Thyroid gland (tissue), 4 donors: ENCODE measurements at regions of chr2 and their contacts with region 1.

Region 1: GRCh38 chr2:15912205-15912604 is 28.1 kb upstream of the MYCN start:
- DNase-seq: peak; percentile 64 to 81
- H3K4me3 ChIP-seq: no peak overlapping the region
- H3K27ac ChIP-seq: peak overlapping the region; percentile 88 to 96 (median 93)
- H3K4me1 ChIP-seq: peaks cover 48 to 51% of the 10 kb centered on the region in 2 donors
- H3K27me3 ChIP-seq: no peaks in the 10 kb centered on the region
- CTCF ChIP-seq: no peak
- POLR2A ChIP-seq: no peak

Region 2: GRCh38 chr2:15092691-15093090 is 819.5 kb before region 1 on chr2:
- intact Hi-C with region 1: no loop called
- DNase-seq: no peak
- H3K4me3 ChIP-seq: no peak overlapping the region
- H3K27ac ChIP-seq: no peak overlapping the region
- H3K4me1 ChIP-seq: no peaks in the 10 kb centered on the region
- H3K27me3 ChIP-seq: no peaks in the 10 kb centered on the region
- CTCF ChIP-seq: no peak
- POLR2A ChIP-seq: no peak

Region 3: DNA sequence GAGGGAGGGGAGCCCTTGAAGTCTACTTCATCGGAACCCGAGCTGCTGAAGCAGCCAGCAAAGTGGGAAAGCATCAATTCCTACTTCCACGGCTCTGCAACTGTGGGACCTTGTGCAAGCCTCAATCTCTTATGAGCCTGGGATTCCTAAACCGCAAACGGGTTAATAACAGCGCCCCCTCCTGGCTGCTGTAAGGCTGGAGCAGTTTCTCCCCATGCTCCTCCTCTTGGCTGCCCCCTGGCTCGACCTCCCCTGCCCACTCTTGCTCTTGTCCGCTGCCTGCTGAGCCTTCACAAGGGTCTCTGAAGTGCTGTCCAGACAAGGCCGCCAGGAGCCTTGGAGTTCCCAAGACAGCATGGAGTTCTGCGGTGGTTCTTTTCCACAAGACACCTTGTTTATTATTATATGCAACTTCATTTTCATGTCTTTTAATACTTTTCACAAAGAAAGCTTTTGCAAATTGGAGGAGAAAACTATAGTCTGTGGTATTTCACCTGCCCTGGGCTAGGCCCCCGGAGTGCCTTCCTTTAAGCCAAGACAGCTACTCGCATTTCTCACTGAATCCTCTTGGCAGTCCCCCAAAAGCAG is 163.4 kb before region 1 on chr2:
- intact Hi-C with region 1: no loop called
- DNase-seq: peak; percentile 50 to 62
- H3K4me3 ChIP-seq: no peak overlapping the region
- H3K27ac ChIP-seq: peak overlapping the region in 2 of 3 donors; percentile 20 to 26
- H3K4me1 ChIP-seq: peaks cover 10 to 35% of the 10 kb centered on the region in 2 donors
- H3K27me3 ChIP-seq: no peaks in the 10 kb centered on the region
- CTCF ChIP-seq: peak in 4 of 6 experiments; percentile 24 to 42 (median 40)
- POLR2A ChIP-seq: no peak

Region 4: DNA sequence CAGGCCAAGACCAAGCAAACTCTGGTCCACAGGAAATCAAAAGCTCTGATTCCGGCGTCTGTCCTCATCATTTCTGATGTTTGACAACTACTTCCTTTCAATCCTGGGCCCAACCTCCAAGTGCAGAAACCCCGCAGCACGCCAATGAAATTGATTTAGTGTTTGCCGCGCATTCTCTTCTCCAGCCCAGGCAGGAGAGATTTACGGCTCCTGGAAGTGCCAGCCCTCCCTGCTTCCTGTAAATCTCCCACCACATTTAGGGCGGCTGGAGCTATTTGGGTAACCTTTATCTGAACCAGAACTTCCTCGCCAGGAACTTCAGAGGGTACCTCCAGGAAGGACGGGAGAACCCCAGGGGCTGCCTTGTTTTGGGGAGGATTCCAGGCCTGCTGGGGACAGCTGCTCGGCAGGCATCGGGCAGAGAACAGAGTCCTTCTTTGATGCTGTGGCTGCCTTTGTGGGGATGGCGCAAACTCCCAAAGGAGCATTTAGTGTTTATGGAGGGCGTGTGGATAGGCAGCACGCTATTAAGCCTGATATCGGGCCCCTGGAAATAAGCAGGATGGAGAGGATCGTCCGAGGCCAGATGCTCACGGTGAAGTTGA is 93.9 kb before region 1 on chr2:
- intact Hi-C with region 1: loop called (anchors 10 kb)
- DNase-seq: no peak
- H3K4me3 ChIP-seq: no peak overlapping the region
- H3K27ac ChIP-seq: no peak overlapping the region
- H3K4me1 ChIP-seq: peaks cover 0 to 12% of the 10 kb centered on the region in 2 donors
- H3K27me3 ChIP-seq: no peaks in the 10 kb centered on the region
- CTCF ChIP-seq: no peak
- POLR2A ChIP-seq: no peak